ENCODE measurements at regions of chr16 and their contacts with region 1.

Region 1: DNA sequence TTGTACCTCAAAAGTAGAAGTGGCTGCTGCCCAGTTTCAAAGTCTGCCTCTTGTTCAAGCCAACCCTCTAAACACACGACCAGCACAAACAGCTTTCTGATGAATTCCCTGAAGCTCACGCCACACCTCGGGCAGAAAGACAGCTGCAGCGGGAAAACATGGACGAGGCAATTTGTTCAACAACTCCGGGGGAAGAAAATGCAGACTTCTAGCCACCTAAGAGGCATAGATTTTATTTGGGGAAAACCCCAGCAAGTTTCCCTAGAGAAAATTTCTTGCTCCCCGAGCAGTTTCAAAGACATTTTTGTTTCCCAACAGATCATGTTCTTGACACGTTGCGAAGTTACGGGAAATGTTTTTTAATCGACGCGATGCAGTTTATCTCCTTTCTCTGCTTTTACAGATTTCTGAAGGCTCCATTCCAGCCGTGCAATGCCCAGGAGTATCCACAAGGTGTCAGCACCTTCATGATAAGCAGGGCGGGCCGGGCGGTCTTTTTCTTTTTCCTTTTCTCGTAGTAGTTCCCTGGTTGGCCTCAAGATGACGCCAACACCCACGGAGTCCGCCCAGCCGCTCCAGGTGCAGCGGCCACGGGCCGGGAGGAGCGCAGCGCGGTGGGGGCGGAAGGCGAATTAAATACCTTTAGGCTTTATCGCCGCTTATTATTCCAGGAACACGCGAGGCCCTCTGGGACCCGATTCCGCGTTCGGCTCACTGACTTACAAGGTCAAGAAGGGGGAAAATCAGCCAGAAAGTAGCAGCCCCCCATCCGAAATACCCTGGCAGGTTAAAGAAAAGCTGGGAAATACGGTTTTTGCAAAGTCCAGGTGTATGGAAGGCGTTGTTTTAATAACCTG is 2.9 kb upstream of the FOXC2 start:
- DNase-seq: peak; percentile 96
- H3K4me3 Mint-ChIP-seq: peak overlapping the region; percentile 30
- H3K27ac Mint-ChIP-seq: peak overlapping the region; percentile 27
- H3K4me1 Mint-ChIP-seq: peaks cover 7% of the 10 kb centered on the region
- H3K27me3 Mint-ChIP-seq: peaks cover 42% of the 10 kb centered on the region

Region 2: DNA sequence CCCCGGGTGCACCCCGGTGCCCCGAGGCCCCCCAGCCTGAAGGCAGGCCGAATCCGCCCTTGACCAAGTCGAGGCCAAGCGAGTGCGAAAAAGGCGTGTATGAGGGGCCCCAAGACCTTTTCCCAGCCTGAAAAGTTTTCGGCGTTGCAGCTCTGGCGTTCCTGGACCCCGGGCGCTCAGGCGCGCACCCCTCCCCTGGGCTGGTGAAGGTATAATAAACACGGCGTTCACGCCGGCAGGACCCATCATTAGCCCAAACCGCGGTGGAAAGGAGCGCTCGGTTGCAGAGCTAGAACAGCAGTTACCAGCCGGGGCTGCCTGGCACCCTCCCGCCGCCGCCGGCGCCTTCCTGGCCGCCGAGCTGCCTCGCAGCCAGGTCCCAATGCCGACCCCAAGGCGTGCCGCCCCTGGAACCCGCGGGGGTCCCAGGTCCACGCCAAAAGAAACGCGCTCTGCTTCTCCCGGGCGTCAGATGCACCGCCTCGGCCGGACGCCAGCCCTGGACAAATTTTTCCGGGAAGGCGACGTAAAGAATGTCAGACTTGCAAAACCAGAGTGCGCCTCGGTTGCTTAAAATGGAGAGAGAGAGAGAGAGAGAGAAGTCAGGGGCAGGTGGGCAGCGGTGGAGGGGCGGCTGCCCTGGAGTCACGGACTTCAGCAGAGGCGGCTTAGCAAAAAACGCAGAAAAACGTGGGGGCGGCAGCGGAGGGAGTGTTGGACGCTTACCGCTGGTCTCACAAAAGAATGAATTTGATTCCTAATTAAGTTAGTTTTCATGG is 64.9 kb before region 1 on chr16:
- intact Hi-C with region 1: loop called (anchors 1 kb)
- DNase-seq: no peak
- H3K4me3 Mint-ChIP-seq: no peak overlapping the region
- H3K27ac Mint-ChIP-seq: peak overlapping the region; percentile 41
- H3K4me1 Mint-ChIP-seq: no peaks in the 10 kb centered on the region
- H3K27me3 Mint-ChIP-seq: peaks cover 81% of the 10 kb centered on the region

Region 3: DNA sequence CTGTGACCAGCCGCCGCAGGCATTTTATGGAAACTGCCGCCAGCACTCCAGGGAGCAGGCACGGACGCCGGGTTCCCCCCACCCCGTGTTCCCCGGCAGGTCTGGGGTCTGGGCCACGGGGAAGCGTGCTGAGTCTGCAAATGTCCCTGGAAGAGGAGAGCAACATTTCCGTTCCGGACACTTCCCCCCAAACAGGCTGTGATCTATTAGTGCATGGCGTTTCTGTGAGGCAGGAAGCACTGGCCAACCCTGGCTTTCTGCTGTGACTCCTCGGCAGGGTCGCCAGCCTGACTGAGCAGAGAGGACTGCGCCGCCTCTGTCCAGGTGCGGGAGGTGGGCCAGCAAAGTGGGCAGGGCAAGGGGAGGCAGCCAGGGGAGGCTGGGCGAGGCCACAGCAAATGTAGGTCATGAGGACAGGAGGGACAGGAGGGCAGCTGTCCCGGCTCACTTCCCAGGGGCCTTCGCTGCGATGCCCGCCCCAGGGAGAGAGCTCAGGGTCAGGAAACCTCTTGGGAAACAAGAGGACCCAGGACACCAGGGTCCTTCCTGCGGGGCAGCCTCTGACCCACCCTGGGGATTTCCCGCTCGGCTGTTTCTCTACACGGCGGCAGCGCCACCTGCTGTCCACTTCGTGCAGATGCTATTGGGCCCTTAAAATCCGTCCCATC is 43.9 kb before region 1 on chr16:
- intact Hi-C with region 1: no loop called
- DNase-seq: peak; percentile 87
- H3K4me3 Mint-ChIP-seq: peak overlapping the region; percentile 6
- H3K27ac Mint-ChIP-seq: no peak overlapping the region
- H3K4me1 Mint-ChIP-seq: peaks cover 2% of the 10 kb centered on the region
- H3K27me3 Mint-ChIP-seq: peaks cover 41% of the 10 kb centered on the region

Region 4: DNA sequence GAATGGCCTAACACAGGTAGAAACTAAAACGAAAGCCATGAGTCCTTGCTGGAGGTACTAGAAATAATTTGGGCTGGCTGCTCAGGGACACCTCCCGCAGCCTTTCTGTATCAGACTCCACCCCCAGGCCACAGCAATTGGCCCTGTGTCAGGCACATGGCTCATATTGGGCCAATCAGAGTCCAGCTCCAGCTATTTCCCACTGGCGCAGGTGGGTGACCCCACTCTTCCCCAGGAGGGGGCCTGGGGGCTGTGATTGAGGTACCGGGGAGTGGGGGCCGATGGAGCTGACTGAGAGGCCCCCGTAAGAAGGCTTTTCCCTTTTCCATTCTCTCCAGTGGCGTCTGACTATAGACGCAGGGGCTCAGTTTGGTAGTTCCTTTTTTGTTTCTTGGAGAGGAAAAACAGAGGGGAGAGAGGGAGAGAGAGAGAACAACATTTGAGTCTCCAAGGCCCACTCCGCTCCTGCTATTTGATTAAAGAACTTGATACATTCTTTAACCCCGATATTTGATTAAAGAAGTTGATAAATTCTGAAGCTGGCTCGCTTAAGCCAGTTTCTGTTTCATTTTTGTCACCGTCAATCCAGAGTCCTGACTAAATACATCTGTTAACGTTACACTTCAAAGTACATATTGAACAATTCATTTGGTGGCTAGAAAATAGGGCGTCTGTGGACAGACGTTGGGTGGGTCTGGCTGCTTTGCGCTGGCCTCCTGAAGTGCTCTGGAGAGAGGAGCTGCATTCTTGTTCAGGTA is 40.9 kb after region 1 on chr16:
- intact Hi-C with region 1: no loop called
- DNase-seq: peak; percentile 84
- H3K4me3 Mint-ChIP-seq: peak overlapping the region; percentile 63
- H3K27ac Mint-ChIP-seq: peak overlapping the region; percentile 2
- H3K4me1 Mint-ChIP-seq: peaks cover 6% of the 10 kb centered on the region
- H3K27me3 Mint-ChIP-seq: peaks cover 11% of the 10 kb centered on the region

Region 5: GRCh38 chr16:86640265-86640843 is 76.6 kb after region 1 on chr16:
- intact Hi-C with region 1: no loop called
- DNase-seq: no peak
- H3K4me3 Mint-ChIP-seq: no peak overlapping the region
- H3K27ac Mint-ChIP-seq: no peak overlapping the region
- H3K4me1 Mint-ChIP-seq: no peaks in the 10 kb centered on the region
- H3K27me3 Mint-ChIP-seq: peaks cover 2% of the 10 kb centered on the region

Region 6: DNA sequence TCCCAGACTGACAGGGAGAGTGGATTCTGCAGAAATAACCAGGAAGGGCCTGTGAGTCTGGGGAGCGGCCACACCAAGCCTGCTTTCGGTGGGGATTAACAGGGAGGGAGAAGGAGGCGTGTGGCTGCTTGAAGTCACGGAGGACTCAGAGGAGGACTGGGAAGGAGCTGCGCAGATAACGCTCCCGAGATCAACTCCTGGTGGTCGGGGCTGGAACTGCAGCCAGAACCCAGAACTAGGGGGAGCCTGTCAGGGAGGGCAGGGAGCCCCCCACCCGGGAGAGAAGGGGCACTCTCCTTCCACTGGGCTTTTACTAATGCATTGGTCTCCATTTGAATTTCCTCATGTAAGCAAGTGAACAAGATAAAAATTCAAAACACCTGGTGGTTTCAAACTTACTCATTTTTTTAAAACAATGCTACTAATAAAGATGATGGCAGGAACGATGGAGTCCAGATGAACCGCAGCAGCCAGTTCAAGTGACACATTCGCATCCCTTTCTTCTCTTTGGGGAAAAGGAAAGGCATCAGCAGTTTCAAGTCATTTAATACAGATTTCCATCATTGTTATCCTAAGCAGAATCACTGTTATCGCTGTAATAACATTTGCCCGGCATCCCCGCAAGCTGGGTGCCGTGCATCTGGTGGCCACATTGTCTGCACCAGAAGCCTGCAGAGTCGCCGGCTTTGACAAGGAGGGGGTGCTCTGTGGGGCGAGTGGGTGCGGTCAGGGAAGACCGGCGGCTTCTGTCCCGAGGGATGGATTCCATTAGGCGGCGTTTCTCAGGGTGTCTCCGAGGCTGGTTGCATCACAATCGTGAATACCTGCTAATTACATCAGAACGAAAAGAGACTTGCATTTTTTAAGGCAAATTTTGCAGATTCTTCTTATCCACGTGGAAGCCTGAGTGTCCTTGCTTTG is 197.7 kb after region 1 on chr16:
- intact Hi-C with region 1: loop called (anchors 5 kb)
- DNase-seq: peak; percentile 84
- H3K4me3 Mint-ChIP-seq: no peak overlapping the region
- H3K27ac Mint-ChIP-seq: no peak overlapping the region
- H3K4me1 Mint-ChIP-seq: no peaks in the 10 kb centered on the region
- H3K27me3 Mint-ChIP-seq: peaks cover 17% of the 10 kb centered on the region

Region 7: GRCh38 chr16:87062569-87063442 is 499.1 kb after region 1 on chr16:
- intact Hi-C with region 1: loop called (anchors 1 kb)
- DNase-seq: peak; percentile 84
- H3K4me3 Mint-ChIP-seq: no peak overlapping the region
- H3K27ac Mint-ChIP-seq: no peak overlapping the region
- H3K4me1 Mint-ChIP-seq: peaks cover 4% of the 10 kb centered on the region
- H3K27me3 Mint-ChIP-seq: peaks cover 39% of the 10 kb centered on the region

Region 8: GRCh38 chr16:87636072-87636684 is 1072.5 kb after region 1 on chr16:
- intact Hi-C with region 1: loop called (anchors 10 kb)
- DNase-seq: peak; percentile 92
- H3K4me3 Mint-ChIP-seq: peak overlapping the region; percentile 73
- H3K27ac Mint-ChIP-seq: no peak overlapping the region
- H3K4me1 Mint-ChIP-seq: peaks cover 7% of the 10 kb centered on the region
- H3K27me3 Mint-ChIP-seq: peaks cover 6% of the 10 kb centered on the region